IMR-90 (cell line): ENCODE measurements at regions of chr12 and their contacts with region 1.

Region 1: GRCh38 chr12:86903159-86903558 is 647.0 kb upstream of the MGAT4C start:
- DNase-seq: no peak
- ATAC-seq: no peak
- H3K4me3 ChIP-seq: no peak overlapping the region
- H3K27ac ChIP-seq: no peak overlapping the region
- H3K4me1 ChIP-seq: no peaks in the 10 kb centered on the region
- H3K27me3 ChIP-seq: no peaks in the 10 kb centered on the region
- CTCF ChIP-seq: no peak
- POLR2A ChIP-seq: no peak
- RAD21 ChIP-seq: no peak

Region 2: GRCh38 chr12:86264451-86265342 is 638.5 kb before region 1 on chr12:
- CTCF ChIA-PET with region 1: no interaction called
- POLR2A ChIA-PET with region 1: no interaction called
- dilution Hi-C with region 1: no loop called
- in situ Hi-C with region 1: no loop called
- intact Hi-C with region 1: loop called (anchors 10 kb)
- DNase-seq: no peak
- ATAC-seq: no peak
- H3K4me3 ChIP-seq: no peak overlapping the region
- H3K27ac ChIP-seq: no peak overlapping the region
- H3K4me1 ChIP-seq: no peaks in the 10 kb centered on the region
- H3K27me3 ChIP-seq: no peaks in the 10 kb centered on the region; the same call in 1 of the 2 replicates
- CTCF ChIP-seq: no peak
- POLR2A ChIP-seq: no peak
- RAD21 ChIP-seq: no peak

Region 3: GRCh38 chr12:86826051-86826450 is 77.1 kb before region 1 on chr12:
- CTCF ChIA-PET with region 1: no interaction called
- POLR2A ChIA-PET with region 1: no interaction called
- dilution Hi-C with region 1: no loop called
- in situ Hi-C with region 1: no loop called
- intact Hi-C with region 1: no loop called
- DNase-seq: no peak
- ATAC-seq: no peak
- H3K4me3 ChIP-seq: no peak overlapping the region
- H3K27ac ChIP-seq: no peak overlapping the region
- H3K4me1 ChIP-seq: no peaks in the 10 kb centered on the region
- H3K27me3 ChIP-seq: no peaks in the 10 kb centered on the region
- CTCF ChIP-seq: no peak
- POLR2A ChIP-seq: no peak
- RAD21 ChIP-seq: no peak

Region 4: DNA sequence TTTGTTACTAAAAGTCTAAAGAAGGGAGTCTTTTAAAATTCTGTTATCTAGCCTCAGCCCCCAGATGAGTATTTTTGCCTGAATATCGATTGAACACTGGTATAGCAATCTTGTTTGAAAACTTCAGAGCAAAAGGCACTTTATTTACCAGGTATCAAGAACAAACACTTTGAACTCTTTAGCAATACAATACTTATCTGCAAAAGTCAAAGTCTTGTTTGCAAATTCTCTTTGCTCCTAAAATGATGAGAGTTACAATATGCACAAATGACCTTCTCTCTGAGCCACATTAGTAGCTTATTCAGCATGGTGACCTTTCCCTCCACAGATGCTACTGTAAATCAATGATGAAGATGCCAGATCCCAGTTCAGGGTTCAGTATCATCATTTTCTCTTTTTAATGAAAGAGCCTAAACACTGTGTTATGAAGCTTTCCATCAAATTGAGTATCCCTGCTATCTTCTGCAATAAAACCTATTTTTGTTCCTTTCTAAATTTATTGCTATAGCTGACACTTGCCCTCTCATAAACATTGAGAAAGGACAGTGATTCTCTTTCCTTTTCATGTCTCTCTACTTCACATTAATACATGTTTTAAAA is 105.7 kb after region 1 on chr12:
- CTCF ChIA-PET with region 1: no interaction called
- POLR2A ChIA-PET with region 1: no interaction called
- dilution Hi-C with region 1: no loop called
- in situ Hi-C with region 1: no loop called
- intact Hi-C with region 1: no loop called
- DNase-seq: no peak
- ATAC-seq: no peak
- H3K4me3 ChIP-seq: no peak overlapping the region
- H3K27ac ChIP-seq: no peak overlapping the region
- H3K4me1 ChIP-seq: no peaks in the 10 kb centered on the region
- H3K27me3 ChIP-seq: no peaks in the 10 kb centered on the region
- CTCF ChIP-seq: no peak
- POLR2A ChIP-seq: no peak
- RAD21 ChIP-seq: no peak